ENCODE measurements at regions of chr6 and their contacts with region 1.

Region 1: DNA sequence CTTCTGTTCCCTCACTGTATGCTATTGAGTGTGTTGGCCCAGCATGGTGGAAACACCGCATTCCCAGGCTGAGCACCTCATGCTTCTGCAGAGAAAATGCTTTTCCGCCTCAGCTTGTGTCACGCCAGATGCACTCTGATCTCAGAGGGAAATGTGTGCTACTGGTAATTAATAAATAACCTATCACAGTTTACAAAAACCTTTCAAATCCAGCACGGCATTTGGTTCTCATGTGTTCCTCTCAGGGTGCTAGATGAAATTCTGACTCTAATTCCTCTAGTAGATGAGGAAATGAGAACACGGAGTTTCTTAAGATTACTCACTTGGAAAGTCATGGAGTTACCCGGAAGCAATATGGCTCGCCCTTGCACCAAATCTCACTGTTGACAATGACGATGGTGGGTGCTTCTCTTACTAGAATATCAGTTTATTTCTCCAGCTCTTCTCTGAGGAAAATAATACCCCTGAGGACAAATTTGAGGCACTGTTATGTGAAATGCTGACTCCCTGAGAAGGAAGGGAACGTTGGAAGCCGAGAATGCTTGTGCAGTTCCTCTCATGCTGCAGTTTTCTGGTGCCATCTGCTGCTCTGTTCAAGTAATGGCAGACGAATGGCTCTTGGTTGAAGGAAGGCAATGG is 116.6 kb downstream of the RNF144B start:
- DNase-seq: peak; percentile 81
- ATAC-seq: peak; percentile 93
- H3K4me3 ChIP-seq: peak overlapping the region; percentile 37 to 58
- H3K27ac ChIP-seq: peak overlapping the region; percentile 72; the same call in 1 of the 2 replicates
- H3K4me1 ChIP-seq: no peaks in the 10 kb centered on the region; the same call in 1 of the 2 replicates
- H3K27me3 ChIP-seq: no peaks in the 10 kb centered on the region
- CTCF ChIP-seq: peak; percentile 93

Region 2: GRCh38 chr6:18207438-18207837 is 296.3 kb before region 1 on chr6:
- CTCF ChIA-PET with region 1: no interaction called
- POLR2A ChIA-PET with region 1: no interaction called
- in situ Hi-C with region 1: no loop called
- intact Hi-C with region 1: no loop called
- DNase-seq: no peak
- ATAC-seq: no peak
- H3K4me3 ChIP-seq: no peak overlapping the region
- H3K27ac ChIP-seq: no peak overlapping the region
- H3K4me1 ChIP-seq: no peaks in the 10 kb centered on the region
- H3K27me3 ChIP-seq: no peaks in the 10 kb centered on the region
- CTCF ChIP-seq: no peak

Region 3: GRCh38 chr6:18323935-18324705 is 179.6 kb before region 1 on chr6:
- CTCF ChIA-PET with region 1: interaction called, 14 read pairs
- POLR2A ChIA-PET with region 1: no interaction called
- in situ Hi-C with region 1: no loop called
- intact Hi-C with region 1: loop called (anchors 1 kb)
- DNase-seq: no peak
- ATAC-seq: peak; percentile 92
- H3K4me3 ChIP-seq: no peak overlapping the region
- H3K27ac ChIP-seq: no peak overlapping the region
- H3K4me1 ChIP-seq: no peaks in the 10 kb centered on the region; the same call in 1 of the 2 replicates
- H3K27me3 ChIP-seq: no peaks in the 10 kb centered on the region
- CTCF ChIP-seq: peak; percentile 69; the same call in 1 of the 2 replicates

Region 4: GRCh38 chr6:18465410-18466154 is 38.1 kb before region 1 on chr6:
- CTCF ChIA-PET with region 1: no interaction called
- POLR2A ChIA-PET with region 1: no interaction called
- in situ Hi-C with region 1: no loop called
- intact Hi-C with region 1: no loop called
- DNase-seq: no peak
- ATAC-seq: no peak
- H3K4me3 ChIP-seq: no peak overlapping the region
- H3K27ac ChIP-seq: no peak overlapping the region
- H3K4me1 ChIP-seq: no peaks in the 10 kb centered on the region
- H3K27me3 ChIP-seq: no peaks in the 10 kb centered on the region
- CTCF ChIP-seq: no peak

Region 5: GRCh38 chr6:18527836-18528743 is 24.4 kb after region 1 on chr6:
- CTCF ChIA-PET with region 1: no interaction called
- POLR2A ChIA-PET with region 1: no interaction called
- in situ Hi-C with region 1: no loop called
- intact Hi-C with region 1: no loop called
- DNase-seq: no peak
- ATAC-seq: no peak
- H3K4me3 ChIP-seq: no peak overlapping the region
- H3K27ac ChIP-seq: no peak overlapping the region
- H3K4me1 ChIP-seq: no peaks in the 10 kb centered on the region
- H3K27me3 ChIP-seq: peaks cover 8% of the 10 kb centered on the region; the same call in 1 of the 2 replicates
- CTCF ChIP-seq: peak; percentile 35; the same call in 1 of the 2 replicates

Measured in Panc1 (cell line).